ENCODE measurements at regions of chr7 and their contacts with region 1.

Region 1: GRCh38 chr7:158829342-158830210 is at the start of gene ESYT2:
- DNase-seq: peak; percentile 97
- ATAC-seq: peak; percentile 83 to 89
- H3K4me3 ChIP-seq: peak within 1 kb of the TSS; percentile 79 to 99 (median 92)
- H3K27ac ChIP-seq: peak within 1 kb of the TSS; percentile 96 to 100 (median 100)
- H3K4me1 ChIP-seq: peaks cover 13 to 15% of the 10 kb centered on the region in 2 donors
- H3K27me3 ChIP-seq: no peaks in the 10 kb centered on the region
- CTCF ChIP-seq: peak in 2 of 5 experiments; percentile 28 to 40
- POLR2A ChIP-seq: peak; percentile 99
- total RNA-seq, gene ESYT2: 67.5 to 106 (median 74.7) TPM

Region 2: DNA sequence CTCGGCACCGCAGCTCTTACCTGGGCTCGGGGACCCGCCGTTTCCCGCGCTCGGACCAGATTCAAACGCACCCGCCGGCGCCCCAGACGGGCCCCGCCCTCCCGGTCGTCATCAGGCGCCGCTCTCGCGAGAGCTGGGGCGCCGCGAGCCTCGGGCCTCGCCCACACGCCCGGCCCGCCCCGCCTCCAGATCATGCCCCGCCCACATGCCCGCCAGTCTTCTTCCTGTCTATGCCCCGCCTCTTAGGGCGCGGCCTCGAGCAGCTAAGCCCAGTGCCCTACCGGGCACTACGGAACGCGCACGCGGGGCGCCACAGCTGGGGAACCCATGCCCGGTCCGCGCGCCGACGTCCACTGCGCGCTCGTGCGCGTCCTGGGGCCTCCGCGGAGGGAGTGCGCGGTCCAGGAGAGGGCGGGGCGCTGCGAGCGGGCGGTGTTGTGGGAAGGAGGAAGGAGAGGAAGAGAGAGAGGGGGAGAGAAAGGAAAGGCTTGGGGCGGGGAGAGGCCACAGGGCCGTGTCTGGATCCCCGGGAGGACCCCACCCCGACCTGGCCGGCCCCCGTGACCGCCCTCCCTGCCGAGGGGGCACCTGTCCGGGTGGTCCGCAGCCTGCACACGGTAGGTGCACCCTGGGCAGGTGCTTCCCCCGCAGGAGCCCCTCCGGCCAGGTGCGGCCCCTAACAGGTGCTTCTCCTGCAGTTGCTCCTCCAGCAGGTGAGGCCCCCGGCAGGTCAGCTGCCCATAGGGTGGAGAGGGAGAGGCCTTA is 124.7 kb before region 1 on chr7 and contains the start of gene NCAPG2:
- in situ Hi-C with region 1: loop called in 1 of 4 experiments (anchors 25 kb)
- intact Hi-C with region 1: loop called (anchors 5 kb)
- DNase-seq: peak; percentile 94 to 96
- ATAC-seq: peak; percentile 98 to 99
- H3K4me3 ChIP-seq: peak within 1 kb of the TSS; percentile 71 to 97 (median 82)
- H3K27ac ChIP-seq: peak within 1 kb of the TSS; percentile 87 to 90 (median 88)
- H3K4me1 ChIP-seq: peaks cover 0 to 17% of the 10 kb centered on the region in 2 donors
- H3K27me3 ChIP-seq: no peaks in the 10 kb centered on the region
- CTCF ChIP-seq: peak; percentile 37 to 58 (median 40)
- POLR2A ChIP-seq: peak; percentile 94 to 96
- total RNA-seq, gene NCAPG2: 3.0 to 4.5 (median 3.9) TPM

Region 3: DNA sequence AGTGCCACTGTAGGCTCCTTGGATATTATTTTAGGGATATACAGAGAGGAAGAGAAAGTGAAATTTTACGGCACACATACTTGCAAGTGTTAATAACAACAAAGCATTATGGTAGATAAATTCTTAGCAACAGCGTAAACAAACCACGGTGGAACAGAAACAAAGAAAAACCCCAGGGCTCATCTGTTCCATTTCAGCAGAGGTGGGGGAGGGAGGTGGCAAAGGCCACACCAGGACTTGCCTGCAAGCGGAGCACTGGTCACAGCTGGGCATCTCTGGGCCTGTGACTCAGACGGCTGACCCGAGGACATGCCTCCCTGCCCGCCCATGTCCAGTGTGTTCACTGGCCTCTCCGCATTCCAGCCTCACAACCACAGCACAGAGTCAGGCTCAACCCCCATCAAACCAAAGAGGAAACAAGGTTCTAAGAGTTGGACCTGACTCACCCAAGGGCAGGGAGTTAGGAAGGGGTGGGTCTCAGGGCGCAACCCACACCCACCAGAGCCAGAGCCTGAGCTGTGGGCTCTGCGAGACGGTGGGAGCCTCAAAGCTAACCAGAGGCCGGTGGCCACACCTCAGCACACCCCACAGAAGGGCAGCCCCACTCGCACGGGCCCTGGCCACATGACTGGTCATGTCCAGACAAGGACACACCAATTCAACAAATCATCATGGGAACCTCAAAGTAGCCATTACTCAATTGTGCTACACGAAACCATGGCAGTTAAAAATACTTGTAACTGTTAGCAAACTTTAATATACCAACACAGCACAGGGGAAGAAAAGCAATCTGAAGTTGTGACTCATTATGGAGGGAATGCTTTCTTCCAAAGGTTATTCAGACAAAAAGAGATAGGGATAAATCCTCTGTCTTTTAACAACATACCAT is 11.0 kb before region 1 on chr7:
- in situ Hi-C with region 1: no loop called
- intact Hi-C with region 1: loop called (anchors 1 kb)
- DNase-seq: peak; percentile 92 to 96
- ATAC-seq: peak; percentile 85
- H3K4me3 ChIP-seq: peak overlapping the region; percentile 8 to 40 (median 34)
- H3K27ac ChIP-seq: peak overlapping the region; percentile 88 to 95 (median 93)
- H3K4me1 ChIP-seq: peaks cover 77 to 82% of the 10 kb centered on the region in 2 donors
- H3K27me3 ChIP-seq: no peaks in the 10 kb centered on the region
- CTCF ChIP-seq: peak in 1 of 5 experiments; percentile 21
- POLR2A ChIP-seq: peak; percentile 46 to 60

Region 4: GRCh38 chr7:158856883-158857668 is 27.5 kb after region 1 on chr7:
- in situ Hi-C with region 1: no loop called
- intact Hi-C with region 1: loop called (anchors 1 kb)
- DNase-seq: no peak
- ATAC-seq: peak in 1 of 2 donors; percentile 17
- H3K4me3 ChIP-seq: peak overlapping the region; percentile 70 to 98 (median 88)
- H3K27ac ChIP-seq: peak overlapping the region; percentile 87 to 94 (median 92)
- H3K4me1 ChIP-seq: peaks cover 14 to 42% of the 10 kb centered on the region in 2 donors
- H3K27me3 ChIP-seq: no peaks in the 10 kb centered on the region
- CTCF ChIP-seq: no peak
- POLR2A ChIP-seq: no peak

Region 5: GRCh38 chr7:158863611-158864506 is 34.3 kb after region 1 on chr7:
- in situ Hi-C with region 1: no loop called
- intact Hi-C with region 1: loop called (anchors 1 kb)
- DNase-seq: peak; percentile 86 to 90
- ATAC-seq: peak; percentile 80 to 85
- H3K4me3 ChIP-seq: peak overlapping the region; percentile 55 to 69 (median 62)
- H3K27ac ChIP-seq: peak overlapping the region; percentile 90 to 94 (median 92)
- H3K4me1 ChIP-seq: peaks cover 13 to 36% of the 10 kb centered on the region in 2 donors
- H3K27me3 ChIP-seq: no peaks in the 10 kb centered on the region
- CTCF ChIP-seq: no peak
- POLR2A ChIP-seq: peak; percentile 66 to 78

Measured in gastrocnemius medialis (tissue), 4 donors.